Transverse colon (tissue), 4 donors: ENCODE measurements at regions of chr7 and their contacts with region 1.

Region 1: GRCh38 chr7:8418629-8419245 is 14.7 kb upstream of the NXPH1 start:
- DNase-seq: peak; percentile 31
- H3K4me3 ChIP-seq: no peak overlapping the region
- H3K27ac ChIP-seq: no peak overlapping the region
- H3K4me1 ChIP-seq: no peaks in the 10 kb centered on the region
- H3K27me3 ChIP-seq: peaks cover 6% of the 10 kb centered on the region
- CTCF ChIP-seq: peak; percentile 55 to 71 (median 66)
- EP300 ChIP-seq: no peak
- POLR2A ChIP-seq: no peak

Region 2: DNA sequence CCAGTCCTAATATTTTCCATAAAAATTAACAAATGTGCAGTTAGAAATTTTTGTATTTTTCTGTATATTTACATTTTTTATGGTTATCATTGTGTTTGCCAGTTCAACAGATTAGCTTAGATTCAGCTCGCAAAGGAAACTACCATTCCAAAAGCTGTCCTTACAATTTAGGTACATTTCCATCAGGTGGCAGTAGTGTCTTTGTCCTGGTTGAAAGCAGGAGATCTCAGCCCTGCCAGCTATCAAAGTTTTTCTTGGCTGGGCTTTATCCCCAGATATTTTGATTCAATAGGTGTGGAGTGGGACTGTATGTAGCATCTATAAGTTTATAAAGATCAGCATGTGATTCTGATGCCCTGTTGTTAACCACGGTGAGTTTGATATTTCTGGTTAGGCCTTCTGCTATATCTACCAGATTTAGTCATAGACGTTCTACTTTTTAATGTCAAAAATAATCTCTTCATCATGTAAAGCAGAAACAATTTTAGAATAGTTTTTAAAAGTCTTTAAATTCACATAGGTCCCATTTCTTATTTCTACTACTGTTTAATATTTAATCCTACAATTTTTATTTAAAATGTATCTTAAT is 141.2 kb before region 1 on chr7:
- in situ Hi-C with region 1: no loop called
- intact Hi-C with region 1: no loop called
- DNase-seq: no peak
- H3K4me3 ChIP-seq: no peak overlapping the region
- H3K27ac ChIP-seq: no peak overlapping the region
- H3K4me1 ChIP-seq: no peaks in the 10 kb centered on the region
- H3K27me3 ChIP-seq: no peaks in the 10 kb centered on the region
- CTCF ChIP-seq: peak; percentile 9 to 22 (median 17)
- EP300 ChIP-seq: no peak
- POLR2A ChIP-seq: no peak

Region 3: GRCh38 chr7:10412422-10413019 is 1993.8 kb after region 1 on chr7:
- in situ Hi-C with region 1: loop called in 3 of 4 experiments (anchors 10 to 25 kb)
- intact Hi-C with region 1: no loop called
- DNase-seq: no peak
- H3K4me3 ChIP-seq: no peak overlapping the region
- H3K27ac ChIP-seq: no peak overlapping the region
- H3K4me1 ChIP-seq: no peaks in the 10 kb centered on the region
- H3K27me3 ChIP-seq: no peaks in the 10 kb centered on the region
- CTCF ChIP-seq: peak; percentile 35 to 64 (median 49)
- EP300 ChIP-seq: no peak
- POLR2A ChIP-seq: no peak